Heart right ventricle (tissue), 16 donors: ENCODE measurements at regions of chr3 and their contacts with region 1.

Region 1: DNA sequence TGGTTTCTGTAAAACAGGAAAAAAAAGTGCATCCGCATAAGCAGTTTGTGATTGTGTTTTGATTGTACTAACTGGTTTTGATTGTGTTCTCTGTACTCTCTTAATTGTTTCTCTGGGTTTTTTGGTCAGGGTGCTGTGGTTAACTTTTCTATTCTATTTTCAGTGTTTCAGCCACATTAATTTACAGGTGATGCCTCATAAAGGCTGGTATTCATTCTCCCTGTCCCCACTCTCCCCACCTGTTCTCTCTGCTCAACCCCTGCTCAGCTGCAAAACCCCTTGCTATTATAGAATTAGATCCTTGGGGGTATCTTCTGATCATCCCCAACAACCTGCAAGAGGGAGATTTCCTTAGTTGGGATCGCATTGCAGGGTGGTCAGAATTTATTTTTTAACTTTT is 285.4 kb upstream of the AZI2 start:
- DNase-seq: no peak
- ATAC-seq: no peak
- H3K4me3 ChIP-seq: no peak overlapping the region
- H3K27ac ChIP-seq: no peak overlapping the region
- H3K4me1 ChIP-seq: peaks cover 0 to 8% (median 0%) of the 10 kb centered on the region in 9 donors
- H3K27me3 ChIP-seq: no peaks in the 10 kb centered on the region
- CTCF ChIP-seq: no peak

Region 2: DNA sequence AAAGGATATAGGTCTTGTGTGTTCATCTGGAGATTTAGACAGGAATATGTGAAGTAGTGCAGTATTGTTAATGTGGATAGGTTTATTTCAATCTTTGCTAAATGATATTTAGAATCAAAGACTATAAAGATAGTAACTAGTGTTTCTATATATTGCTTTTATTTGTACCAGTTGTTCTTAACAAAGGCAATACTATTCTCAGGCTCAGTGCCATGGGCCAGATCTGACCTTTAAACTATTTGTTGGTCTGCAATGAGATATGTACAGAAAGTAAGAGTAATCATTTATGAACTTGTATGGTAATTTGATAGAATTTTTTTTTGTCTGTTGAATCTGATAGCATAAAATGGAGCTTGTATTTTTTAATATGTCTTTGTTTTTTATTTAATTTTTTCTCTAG is 138.7 kb before region 1 on chr3:
- intact Hi-C with region 1: loop called in 1 of 10 experiments (anchors 5 kb)
- DNase-seq: no peak
- ATAC-seq: no peak
- H3K4me3 ChIP-seq: no peak overlapping the region
- H3K27ac ChIP-seq: no peak overlapping the region
- H3K4me1 ChIP-seq: no peaks in the 10 kb centered on the region
- H3K27me3 ChIP-seq: no peaks in the 10 kb centered on the region
- CTCF ChIP-seq: no peak